ENCODE measurements at regions of chr3 and their contacts with region 1.

Region 1: DNA sequence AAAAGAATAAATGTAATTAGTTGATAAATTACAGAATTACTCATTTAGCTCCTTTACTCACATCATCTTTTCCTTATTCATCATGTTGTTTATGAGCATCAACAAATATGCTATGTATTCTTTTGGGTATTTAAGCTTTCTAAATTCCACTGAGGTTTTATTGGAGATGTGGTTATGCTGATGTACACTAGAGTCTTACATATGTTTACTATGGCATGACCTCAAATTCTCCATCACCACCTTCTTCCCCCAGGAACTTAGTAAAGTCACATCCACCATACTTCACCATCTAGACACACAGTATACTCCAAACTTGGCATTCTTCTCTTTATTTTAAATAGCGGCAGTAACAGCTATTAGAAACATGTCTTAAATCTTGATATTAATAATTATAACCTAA is 74.1 kb upstream of the MELTF start:
- DNase-seq: no peak
- ATAC-seq: no peak
- H3K4me3 ChIP-seq: no peak overlapping the region
- H3K27ac ChIP-seq: no peak overlapping the region
- H3K4me1 ChIP-seq: no peaks in the 10 kb centered on the region
- H3K27me3 ChIP-seq: no peaks in the 10 kb centered on the region
- CTCF ChIP-seq: no peak
- POLR2A ChIP-seq: no peak

Region 2: GRCh38 chr3:197068077-197068476 is 35.7 kb before region 1 on chr3:
- intact Hi-C with region 1: loop called in 1 of 10 experiments (anchors 5 kb)
- DNase-seq: no peak
- ATAC-seq: no peak
- H3K4me3 ChIP-seq: no peak overlapping the region
- H3K27ac ChIP-seq: no peak overlapping the region
- H3K4me1 ChIP-seq: no peaks in the 10 kb centered on the region
- H3K27me3 ChIP-seq: no peaks in the 10 kb centered on the region
- CTCF ChIP-seq: no peak
- POLR2A ChIP-seq: no peak

Measured in heart left ventricle (tissue), 16 donors.